SK-N-SH (cell line): ENCODE measurements at regions of chr4 and their contacts with region 1.

Region 1: GRCh38 chr4:154982187-154983047 is 201.3 kb downstream of the RBM46 start:
- DNase-seq: peak; percentile 58
- H3K4me3 ChIP-seq: peak overlapping the region in 1 of 2 experiments; percentile 41; a peak in 1 of 4 replicates
- H3K27ac ChIP-seq: no peak overlapping the region
- H3K4me1 ChIP-seq: peaks cover 0 to 2% of the 10 kb centered on the region in 2 experiments; a peak in 1 of 4 replicates
- H3K27me3 ChIP-seq: no peaks in the 10 kb centered on the region
- CTCF ChIP-seq: peak; percentile 70
- EP300 ChIP-seq: no peak
- RAD21 ChIP-seq: peak; percentile 88

Region 2: GRCh38 chr4:155207534-155208257 is 225.3 kb after region 1 on chr4:
- CTCF ChIA-PET with region 1: interaction called, 15 read pairs
- POLR2A ChIA-PET with region 1: no interaction called
- DNase-seq: peak; percentile 47
- H3K4me3 ChIP-seq: peak overlapping the region in 1 of 2 experiments; percentile 42; a peak in 2 of 4 replicates
- H3K27ac ChIP-seq: no peak overlapping the region
- H3K4me1 ChIP-seq: no peaks in the 10 kb centered on the region
- H3K27me3 ChIP-seq: 0 out of 2 replicates have a peak, but pooled peaks cover 13% of the 10 kb centered on the region
- CTCF ChIP-seq: no peak
- EP300 ChIP-seq: no peak
- RAD21 ChIP-seq: peak; percentile 36